MCF 10A (cell line): ENCODE measurements at regions of chr12 and their contacts with region 1.

Region 1: DNA sequence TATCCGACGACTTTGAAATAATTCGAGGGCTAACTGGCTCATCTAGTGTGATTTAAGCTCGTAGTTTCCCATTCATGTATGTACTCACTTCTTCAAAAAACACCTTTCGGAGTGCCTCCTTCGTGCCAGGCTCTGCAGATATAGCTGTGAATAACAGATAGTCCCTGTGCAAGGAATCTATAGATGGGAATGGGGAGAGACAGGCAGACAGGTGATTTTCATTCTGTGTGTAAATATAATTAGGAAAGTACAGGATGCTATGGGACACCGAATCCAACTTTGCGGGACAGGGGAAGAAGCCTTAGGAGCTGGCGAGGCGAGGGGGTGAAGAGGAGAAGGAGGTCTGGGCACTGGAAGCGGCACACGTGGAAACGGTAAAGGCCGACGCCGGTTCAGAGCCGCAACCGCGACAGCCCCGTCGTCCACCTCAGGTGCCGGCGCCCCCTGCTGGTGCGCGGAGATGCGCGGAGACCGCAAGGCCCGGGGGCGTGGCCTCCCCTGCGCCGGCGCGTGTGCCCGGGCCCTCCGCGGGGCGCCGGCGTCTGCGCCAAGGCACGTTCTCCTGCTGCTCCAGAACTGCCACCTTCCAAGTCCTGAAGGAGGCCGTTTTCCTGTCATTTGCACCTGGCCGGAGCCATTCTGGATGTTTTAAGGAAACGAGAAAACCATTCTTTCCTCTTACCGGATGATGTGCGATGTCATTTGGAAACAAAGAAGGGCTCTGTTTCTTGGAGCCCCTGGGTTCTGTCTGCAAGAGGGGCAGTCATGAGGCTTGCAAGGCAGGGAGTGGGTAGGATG is 18.0 kb upstream of the CACNA1C start:
- DNase-seq: peak; percentile 53
- H3K4me3 Mint-ChIP-seq: peak overlapping the region; percentile 40
- H3K27ac Mint-ChIP-seq: no peak overlapping the region
- H3K4me1 Mint-ChIP-seq: peaks cover 5% of the 10 kb centered on the region
- H3K27me3 Mint-ChIP-seq: peaks cover 86% of the 10 kb centered on the region
- CTCF ChIP-seq: peak; percentile 59

Region 2: DNA sequence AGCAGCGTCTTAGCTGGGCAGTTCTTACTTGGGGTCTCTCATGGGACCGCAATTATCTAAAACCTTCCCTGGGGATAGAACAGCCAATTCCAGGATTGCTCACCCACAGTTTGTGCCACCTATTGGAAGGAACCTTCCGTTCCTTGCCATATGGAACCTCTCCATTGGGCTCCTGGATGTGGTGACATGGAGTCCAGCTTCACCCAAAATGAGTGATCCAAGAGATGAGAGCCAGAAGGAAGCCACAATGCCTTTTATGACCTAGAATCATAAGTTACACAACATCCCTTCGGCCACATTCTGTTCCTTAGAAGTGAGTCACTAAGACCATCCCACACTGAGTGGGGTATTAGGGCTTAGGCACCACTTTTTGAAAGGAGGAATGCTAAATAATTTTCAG is 604.9 kb before region 1 on chr12:
- CTCF ChIA-PET with region 1: no interaction called
- POLR2A ChIA-PET with region 1: no interaction called
- intact Hi-C with region 1: no loop called
- DNase-seq: peak; percentile 80
- H3K4me3 Mint-ChIP-seq: no peak overlapping the region
- H3K27ac Mint-ChIP-seq: no peak overlapping the region
- H3K4me1 Mint-ChIP-seq: peaks cover 8% of the 10 kb centered on the region
- H3K27me3 Mint-ChIP-seq: no peaks in the 10 kb centered on the region
- CTCF ChIP-seq: no peak

Region 3: DNA sequence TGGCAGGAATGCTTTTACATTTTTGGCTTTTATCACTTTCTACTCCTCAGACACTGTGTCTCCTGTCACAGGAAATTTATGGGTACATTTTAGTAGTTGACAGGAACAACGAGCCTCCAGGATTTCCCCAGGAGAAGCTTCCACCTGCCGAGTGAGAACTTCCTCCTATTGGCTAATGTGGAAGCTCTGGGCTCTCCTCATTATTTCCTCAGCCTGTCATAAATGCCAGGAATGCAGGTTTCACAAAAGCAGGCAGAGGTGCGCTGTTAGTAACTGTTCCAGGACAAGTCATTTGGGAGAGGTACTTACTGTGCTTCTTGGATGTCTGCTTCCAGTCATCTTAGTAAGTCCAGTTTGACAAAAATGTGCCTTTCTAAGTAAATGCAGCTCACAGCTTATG is 11.5 kb before region 1 on chr12:
- CTCF ChIA-PET with region 1: interaction called, 10 read pairs
- POLR2A ChIA-PET with region 1: no interaction called
- intact Hi-C with region 1: no loop called
- DNase-seq: peak; percentile 5
- H3K4me3 Mint-ChIP-seq: no peak overlapping the region
- H3K27ac Mint-ChIP-seq: no peak overlapping the region
- H3K4me1 Mint-ChIP-seq: no peaks in the 10 kb centered on the region
- H3K27me3 Mint-ChIP-seq: peaks cover 40% of the 10 kb centered on the region
- CTCF ChIP-seq: no peak

Region 4: DNA sequence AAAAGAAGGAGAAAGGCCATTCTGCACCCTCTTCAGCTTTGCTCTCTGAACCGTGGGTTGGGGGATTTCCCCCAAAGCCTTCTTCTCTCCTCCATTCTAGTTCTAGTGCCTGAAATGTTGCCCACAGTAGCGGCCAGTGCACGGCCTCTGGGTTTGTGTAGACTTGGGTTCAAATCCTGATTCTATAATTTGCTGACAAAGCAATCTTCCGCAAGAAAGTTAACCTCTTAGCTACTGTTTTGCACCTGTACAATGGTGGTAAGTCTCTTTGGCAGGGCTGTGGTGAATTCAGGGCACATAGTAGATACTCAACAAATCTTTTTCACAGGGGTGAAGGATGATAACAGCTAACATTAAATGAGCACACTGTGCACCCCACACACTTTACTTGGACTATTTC is 12.1 kb after region 1 on chr12:
- CTCF ChIA-PET with region 1: interaction called, 12 read pairs
- POLR2A ChIA-PET with region 1: interaction called, 3 read pairs
- intact Hi-C with region 1: no loop called
- DNase-seq: no peak
- H3K4me3 Mint-ChIP-seq: no peak overlapping the region
- H3K27ac Mint-ChIP-seq: no peak overlapping the region
- H3K4me1 Mint-ChIP-seq: no peaks in the 10 kb centered on the region
- H3K27me3 Mint-ChIP-seq: peaks cover 58% of the 10 kb centered on the region
- CTCF ChIP-seq: no peak